Tibial artery (tissue), 4 donors: ENCODE measurements at regions of chr9 and their contacts with region 1.

Region 1: GRCh38 chr9:1009101-1009707 is 32.7 kb downstream of the DMRT3 start:
- DNase-seq: peak; percentile 66 to 84
- H3K4me3 ChIP-seq: no peak overlapping the region
- H3K27ac ChIP-seq: no peak overlapping the region
- H3K4me1 ChIP-seq: peaks cover 0 to 5% (median 0%) of the 10 kb centered on the region in 4 donors
- H3K27me3 ChIP-seq: peaks cover 0 to 21% of the 10 kb centered on the region in 2 donors
- CTCF ChIP-seq: peak; percentile 78 to 87

Region 2: GRCh38 chr9:394347-395052 is 614.7 kb before region 1 on chr9:
- intact Hi-C with region 1: loop called (anchors 10 kb)
- DNase-seq: no peak
- H3K4me3 ChIP-seq: no peak overlapping the region
- H3K27ac ChIP-seq: no peak overlapping the region
- H3K4me1 ChIP-seq: peaks cover 0 to 10% (median 3%) of the 10 kb centered on the region in 4 donors
- H3K27me3 ChIP-seq: no peaks in the 10 kb centered on the region
- CTCF ChIP-seq: no peak

Region 3: DNA sequence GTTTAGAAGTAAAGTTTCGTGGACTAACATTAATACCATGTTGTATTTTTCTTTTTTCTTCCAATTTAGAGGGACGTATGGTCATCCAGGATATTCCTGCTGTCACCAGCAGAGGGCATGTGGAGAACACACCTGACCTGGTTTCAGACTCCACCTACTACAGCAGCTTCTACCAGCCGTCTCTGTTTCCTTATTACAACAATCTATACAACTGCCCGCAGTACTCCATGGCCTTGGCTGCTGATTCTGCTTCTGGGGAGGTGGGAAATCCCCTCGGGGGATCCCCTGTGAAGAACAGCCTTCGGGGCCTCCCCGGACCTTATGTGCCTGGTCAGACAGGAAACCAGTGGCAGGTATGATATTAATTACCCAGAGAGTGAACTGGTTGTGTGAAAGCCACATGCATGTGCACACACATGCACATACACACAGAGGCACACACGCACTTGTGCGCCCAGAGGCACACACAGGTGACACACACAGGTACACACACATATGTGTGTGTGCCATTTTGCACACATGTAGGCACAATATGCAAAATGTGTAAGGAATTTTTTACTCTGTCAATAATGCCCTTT is 115.3 kb before region 1 on chr9:
- intact Hi-C with region 1: loop called (anchors 10 kb)
- DNase-seq: peak in 1 of 2 donors; percentile 29
- H3K4me3 ChIP-seq: no peak overlapping the region
- H3K27ac ChIP-seq: no peak overlapping the region
- H3K4me1 ChIP-seq: no peaks in the 10 kb centered on the region
- H3K27me3 ChIP-seq: peaks cover 0 to 12% of the 10 kb centered on the region in 2 donors
- CTCF ChIP-seq: peak; percentile 55 to 59